Transverse colon (tissue), 4 donors: ENCODE measurements at regions of chr1 and their contacts with region 1.

Region 1: DNA sequence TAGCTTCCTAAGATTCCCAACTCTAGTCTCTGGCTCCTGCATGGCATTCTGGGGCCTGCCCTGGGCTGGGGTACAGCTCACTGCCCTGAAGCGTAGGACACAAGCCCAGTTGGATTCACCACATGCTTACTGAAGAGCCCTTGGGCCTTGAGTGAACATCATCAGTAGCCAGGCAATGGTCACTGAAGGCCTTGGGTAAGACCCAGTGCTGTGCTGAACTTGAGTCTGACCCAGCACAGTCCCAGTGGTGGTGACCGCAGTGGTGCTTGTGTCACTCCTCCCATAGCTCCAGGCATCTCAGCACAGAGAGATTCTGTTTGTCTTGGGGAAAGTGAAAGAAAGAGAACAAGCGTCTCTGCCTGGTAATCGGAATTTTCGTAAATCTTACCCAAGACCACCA is 7.7 kb upstream of the LCE3A start:
- DNase-seq: no peak
- H3K4me3 ChIP-seq: no peak overlapping the region
- H3K27ac ChIP-seq: no peak overlapping the region
- H3K4me1 ChIP-seq: no peaks in the 10 kb centered on the region
- H3K27me3 ChIP-seq: no peaks in the 10 kb centered on the region
- CTCF ChIP-seq: no peak
- EP300 ChIP-seq: no peak
- POLR2A ChIP-seq: no peak

Region 2: GRCh38 chr1:152415454-152416227 is 215.0 kb before region 1 on chr1:
- in situ Hi-C with region 1: no loop called
- intact Hi-C with region 1: no loop called
- DNase-seq: no peak
- H3K4me3 ChIP-seq: no peak overlapping the region
- H3K27ac ChIP-seq: no peak overlapping the region
- H3K4me1 ChIP-seq: no peaks in the 10 kb centered on the region
- H3K27me3 ChIP-seq: no peaks in the 10 kb centered on the region
- CTCF ChIP-seq: no peak
- EP300 ChIP-seq: no peak
- POLR2A ChIP-seq: no peak

Region 3: GRCh38 chr1:152479792-152480595 is 150.6 kb before region 1 on chr1:
- in situ Hi-C with region 1: no loop called
- intact Hi-C with region 1: no loop called
- DNase-seq: peak; percentile 64
- H3K4me3 ChIP-seq: no peak overlapping the region
- H3K27ac ChIP-seq: no peak overlapping the region
- H3K4me1 ChIP-seq: peaks cover 0 to 3% (median 0%) of the 10 kb centered on the region in 4 donors
- H3K27me3 ChIP-seq: no peaks in the 10 kb centered on the region
- CTCF ChIP-seq: peak in 4 of 5 experiments; percentile 18 to 43 (median 28)
- EP300 ChIP-seq: no peak
- POLR2A ChIP-seq: no peak

Region 4: GRCh38 chr1:152577168-152577567 is 53.5 kb before region 1 on chr1:
- in situ Hi-C with region 1: loop called in 1 of 4 experiments (anchors 10 kb)
- intact Hi-C with region 1: no loop called
- DNase-seq: no peak
- H3K4me3 ChIP-seq: no peak overlapping the region
- H3K27ac ChIP-seq: no peak overlapping the region
- H3K4me1 ChIP-seq: no peaks in the 10 kb centered on the region
- H3K27me3 ChIP-seq: no peaks in the 10 kb centered on the region
- CTCF ChIP-seq: no peak
- EP300 ChIP-seq: no peak
- POLR2A ChIP-seq: no peak